ENCODE measurements at regions of chr13 and their contacts with region 1.

Region 1: DNA sequence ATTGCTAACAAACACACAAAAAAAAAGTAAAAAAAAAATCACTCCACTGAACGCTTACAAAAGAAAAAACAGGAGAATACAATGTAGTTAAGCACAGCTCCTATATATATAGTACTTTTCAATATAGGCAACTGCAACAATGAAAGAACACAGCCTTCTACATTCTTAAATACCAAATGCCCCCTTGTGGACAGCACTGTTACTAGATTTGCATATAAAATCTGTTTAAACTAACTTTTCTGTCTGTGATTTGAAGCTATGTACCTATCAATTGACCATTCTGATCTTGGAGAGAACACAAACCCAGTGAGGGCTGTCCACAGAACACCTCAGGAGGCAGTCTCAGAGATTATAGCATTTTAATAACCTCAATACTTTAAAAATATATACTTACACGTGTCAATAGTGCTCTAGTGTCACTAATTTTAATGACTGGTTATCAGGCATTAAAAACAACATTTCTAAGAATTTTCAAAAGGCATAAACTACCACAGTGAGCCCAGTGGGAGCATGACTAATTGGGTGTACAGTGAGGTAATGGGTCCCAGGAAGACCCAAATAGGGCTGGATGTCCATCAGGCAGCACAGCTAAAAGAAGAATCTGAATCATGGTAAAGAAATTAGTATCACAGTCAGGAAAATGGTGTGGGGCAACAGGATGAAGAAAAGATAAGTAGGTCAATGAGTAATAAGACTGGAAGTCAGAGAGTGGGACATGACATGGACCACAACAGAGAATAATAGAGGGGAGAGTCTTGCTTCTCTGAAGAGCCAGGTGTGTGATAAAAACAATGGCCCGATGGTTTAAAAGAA is 22.2 kb downstream of the CCDC169 start:
- DNase-seq: no peak
- ATAC-seq: peak; percentile 68

Region 2: DNA sequence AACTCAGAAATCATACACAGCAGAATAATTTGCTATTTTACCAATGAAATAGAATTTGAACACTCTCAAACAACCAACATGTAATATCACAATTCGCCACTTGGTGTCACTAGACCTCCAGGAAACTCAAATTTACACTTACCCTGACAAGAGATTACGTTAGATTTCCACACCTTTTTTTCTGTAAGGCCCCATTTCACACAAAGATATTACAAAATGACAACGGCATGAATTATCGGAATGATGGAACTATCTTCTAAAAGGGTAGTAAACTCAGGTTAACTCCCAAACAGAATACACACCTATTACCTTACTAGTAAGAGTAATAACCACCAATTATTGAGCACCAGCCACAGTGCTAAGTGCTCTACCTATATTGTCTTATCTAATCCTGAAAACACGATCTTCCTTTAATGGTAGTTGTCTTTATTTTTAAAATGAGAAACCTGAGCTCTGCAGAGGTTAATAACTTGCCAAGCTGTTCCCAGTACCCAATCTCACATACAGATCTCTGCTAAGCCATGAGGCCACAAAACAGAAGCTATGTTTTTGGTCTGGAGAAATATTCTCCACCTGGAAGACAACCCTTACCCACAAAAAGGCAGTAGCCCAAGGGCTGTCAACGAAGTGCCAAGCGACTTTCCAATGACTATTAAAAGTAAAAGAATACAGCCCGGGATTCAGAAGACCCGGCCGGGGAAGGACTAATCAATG is 296.6 kb before region 1 on chr13:
- intact Hi-C with region 1: loop called (anchors 2 kb)
- DNase-seq: no peak
- ATAC-seq: peak; percentile 72

Region 3: DNA sequence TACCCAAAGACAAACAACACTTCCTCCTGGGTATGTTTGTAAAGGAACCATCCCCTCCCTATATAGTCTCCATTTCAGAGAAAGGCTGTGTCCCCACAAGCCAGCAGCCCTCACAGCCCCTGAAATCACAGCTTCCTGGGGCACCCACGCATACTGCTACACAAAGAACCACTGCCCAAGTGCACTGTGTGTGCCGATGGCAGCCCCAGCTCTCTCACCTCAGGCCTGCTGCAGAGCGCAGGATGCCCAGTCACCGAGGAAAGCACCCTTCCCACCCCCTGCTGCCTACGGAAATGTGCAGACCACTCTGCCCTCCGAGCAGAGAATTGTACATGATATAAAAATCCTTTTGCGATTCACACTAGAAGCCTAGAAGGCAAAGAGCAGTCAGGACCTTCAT is 100.5 kb before region 1 on chr13:
- intact Hi-C with region 1: no loop called
- DNase-seq: no peak
- ATAC-seq: no peak

Region 4: GRCh38 chr13:36887758-36888521 is 612.5 kb after region 1 on chr13:
- intact Hi-C with region 1: no loop called
- DNase-seq: no peak
- ATAC-seq: no peak

Region 5: DNA sequence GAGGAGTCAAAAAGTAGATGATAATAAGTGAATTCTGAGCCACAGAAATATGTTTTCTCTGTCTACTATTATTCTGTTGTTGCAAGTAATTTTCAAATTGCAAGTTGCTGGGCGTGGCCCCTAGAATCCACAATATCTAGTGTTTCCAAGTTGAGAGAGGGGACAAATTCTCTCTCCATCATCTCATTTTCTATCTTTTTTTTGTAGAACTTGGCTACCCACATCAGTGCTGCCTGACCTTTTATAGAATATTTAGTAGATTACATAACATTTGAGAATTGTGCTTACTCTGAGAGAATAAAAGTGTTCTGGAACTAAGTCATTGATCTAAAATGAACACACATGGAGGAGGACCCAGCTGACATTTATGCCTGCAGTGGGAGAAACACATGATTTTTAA is 940.9 kb after region 1 on chr13:
- intact Hi-C with region 1: no loop called
- DNase-seq: no peak
- ATAC-seq: no peak

Measured in Right ventricle myocardium superior (tissue), 1 donor.